Activated CD4-positive, alpha-beta memory T cell treated with anti-CD3 and anti-CD28 coated beads for 36 hours (primary cell): ENCODE measurements at regions of chr19 and their contacts with region 1.

Region 1: GRCh38 chr19:40777937-40778705 is at the start of gene RAB4B:
- DNase-seq: peak; percentile 100
- H3K4me3 Mint-ChIP-seq: peak within 1 kb of the TSS; percentile 91
- H3K27ac Mint-ChIP-seq: peak within 1 kb of the TSS; percentile 92
- H3K4me1 Mint-ChIP-seq: peaks cover 37% of the 10 kb centered on the region
- H3K27me3 Mint-ChIP-seq: no peaks in the 10 kb centered on the region
- total RNA-seq, gene RAB4B: 38.0 to 41.7 TPM

Region 2: GRCh38 chr19:40609561-40610395 is 168.3 kb before region 1 on chr19:
- CTCF ChIA-PET with region 1: no interaction called
- POLR2A ChIA-PET with region 1: interaction called, 4 read pairs
- intact Hi-C with region 1: loop called (anchors 2 kb)
- DNase-seq: peak; percentile 97
- H3K4me3 Mint-ChIP-seq: peak overlapping the region; percentile 72
- H3K27ac Mint-ChIP-seq: peak overlapping the region; percentile 84
- H3K4me1 Mint-ChIP-seq: peaks cover 61% of the 10 kb centered on the region
- H3K27me3 Mint-ChIP-seq: no peaks in the 10 kb centered on the region

Region 3: GRCh38 chr19:40724855-40725254 is 53.3 kb before region 1 on chr19:
- CTCF ChIA-PET with region 1: no interaction called
- POLR2A ChIA-PET with region 1: no interaction called
- intact Hi-C with region 1: loop called (anchors 2 kb)
- DNase-seq: peak; percentile 36
- H3K4me3 Mint-ChIP-seq: no peak overlapping the region
- H3K27ac Mint-ChIP-seq: peak overlapping the region; percentile 71
- H3K4me1 Mint-ChIP-seq: peaks cover 42% of the 10 kb centered on the region
- H3K27me3 Mint-ChIP-seq: no peaks in the 10 kb centered on the region

Region 4: DNA sequence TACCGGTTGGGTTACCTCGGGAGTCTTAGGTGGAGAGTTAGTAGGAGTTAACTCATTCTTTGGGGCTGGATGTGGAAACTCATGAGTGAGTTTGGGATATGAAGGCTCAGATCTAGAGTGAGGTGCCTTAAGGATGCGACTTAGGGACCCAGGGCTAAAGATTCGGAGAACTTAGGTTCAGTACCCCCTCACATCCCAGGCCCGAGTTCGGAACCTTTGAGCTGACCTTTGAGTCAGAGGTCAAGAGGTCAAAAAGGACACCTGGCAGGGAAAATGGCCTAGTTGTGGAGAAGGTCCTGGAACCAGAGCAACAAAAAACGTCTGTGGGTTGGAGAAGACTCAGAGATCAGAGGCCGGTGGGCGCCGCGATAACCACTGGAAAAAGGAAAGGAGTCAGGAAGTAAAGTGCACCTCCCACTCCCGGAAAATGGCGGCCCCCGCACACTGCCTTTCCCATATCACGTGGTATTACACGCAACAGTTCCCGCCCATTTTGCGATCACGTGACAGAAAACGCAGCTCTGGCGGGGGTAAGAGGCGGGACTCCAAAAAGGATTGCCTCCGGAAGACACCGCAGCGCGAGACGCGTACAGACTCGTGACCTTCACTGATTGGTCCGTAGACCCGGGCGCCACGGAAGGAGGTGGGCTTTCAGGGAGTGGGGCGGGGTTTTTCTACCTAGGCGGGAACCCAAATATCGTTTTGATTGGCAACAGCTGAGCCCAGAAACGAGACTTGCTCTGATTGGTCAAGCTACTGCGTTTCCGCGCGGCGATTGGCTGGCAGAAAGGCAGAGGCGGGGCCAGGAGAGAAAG is 27.9 kb before region 1 on chr19 and contains the start of gene ACTMAP:
- CTCF ChIA-PET with region 1: interaction called, 37 read pairs
- POLR2A ChIA-PET with region 1: interaction called, 54 read pairs
- intact Hi-C with region 1: loop called (anchors 1 kb)
- DNase-seq: peak; percentile 100
- H3K4me3 Mint-ChIP-seq: peak within 1 kb of the TSS; percentile 94
- H3K27ac Mint-ChIP-seq: peak within 1 kb of the TSS; percentile 97
- H3K4me1 Mint-ChIP-seq: peaks cover 32% of the 10 kb centered on the region
- H3K27me3 Mint-ChIP-seq: no peaks in the 10 kb centered on the region
- total RNA-seq, gene ACTMAP: 14.1 to 15.8 TPM

Region 5: DNA sequence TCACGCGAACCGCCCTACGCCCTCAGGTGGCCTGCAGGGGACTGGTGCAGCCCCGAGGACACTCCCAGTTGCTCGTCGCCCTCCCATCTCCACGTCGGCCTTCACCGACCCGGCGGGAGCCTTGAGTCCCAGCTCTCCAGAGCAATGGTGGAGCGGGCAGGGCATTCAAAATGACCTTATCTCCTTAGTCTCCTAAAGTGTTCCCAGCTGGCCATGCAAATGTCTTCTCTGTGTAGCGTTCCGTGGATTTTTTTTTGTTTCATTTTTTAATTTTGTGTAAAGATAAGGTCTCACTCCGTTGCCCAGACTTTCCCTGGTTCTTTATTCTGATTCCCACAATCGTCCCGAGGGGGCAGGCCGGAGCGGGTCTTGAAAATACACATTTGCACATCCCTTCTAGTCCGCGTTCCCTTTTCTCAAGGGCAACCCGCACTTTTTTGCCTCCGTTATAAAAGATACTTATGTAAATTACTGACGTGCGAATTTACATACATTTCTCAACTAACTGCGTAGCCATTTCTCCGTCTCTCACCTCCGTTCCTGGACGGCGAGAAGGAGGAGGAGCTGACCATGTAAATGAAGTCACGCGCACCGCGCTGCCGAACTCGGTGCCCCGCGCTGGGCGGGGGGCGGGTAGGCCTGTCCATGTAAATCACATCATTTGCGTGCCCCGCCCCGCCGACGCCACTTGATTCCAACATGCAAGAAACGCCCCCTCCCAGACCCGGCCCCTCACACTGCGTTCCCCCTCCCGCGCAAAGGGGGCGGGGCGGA is 20.3 kb after region 1 on chr19:
- CTCF ChIA-PET with region 1: interaction called, 32 read pairs
- POLR2A ChIA-PET with region 1: interaction called, 23 read pairs
- intact Hi-C with region 1: loop called (anchors 1 kb)
- DNase-seq: peak; percentile 100
- H3K4me3 Mint-ChIP-seq: peak overlapping the region; percentile 91
- H3K27ac Mint-ChIP-seq: peak overlapping the region; percentile 93
- H3K4me1 Mint-ChIP-seq: peaks cover 49% of the 10 kb centered on the region
- H3K27me3 Mint-ChIP-seq: no peaks in the 10 kb centered on the region

Region 6: GRCh38 chr19:40806488-40807468 is 28.7 kb after region 1 on chr19:
- CTCF ChIA-PET with region 1: interaction called, 38 read pairs
- POLR2A ChIA-PET with region 1: interaction called, 17 read pairs
- intact Hi-C with region 1: loop called (anchors 1 kb)
- DNase-seq: peak; percentile 89
- H3K4me3 Mint-ChIP-seq: peak overlapping the region; percentile 67
- H3K27ac Mint-ChIP-seq: peak overlapping the region; percentile 89
- H3K4me1 Mint-ChIP-seq: peaks cover 81% of the 10 kb centered on the region
- H3K27me3 Mint-ChIP-seq: no peaks in the 10 kb centered on the region